Endothelial cell of umbilical vein (primary cell): ENCODE measurements at regions of chr13 and their contacts with region 1.

Region 1: GRCh38 chr13:48769107-48769704 is 115.5 kb downstream of the CYSLTR2 start:
- DNase-seq: peak; percentile 93
- H3K4me3 ChIP-seq: no peak overlapping the region
- H3K27ac ChIP-seq: no peak overlapping the region
- H3K4me1 ChIP-seq: no peaks in the 10 kb centered on the region
- H3K27me3 ChIP-seq: peaks cover 15 to 30% of the 10 kb centered on the region in 2 experiments
- CTCF ChIP-seq: peak; percentile 92 to 98
- POLR2A ChIP-seq: no peak

Region 2: GRCh38 chr13:46893798-46894560 is 1875.2 kb before region 1 on chr13:
- CTCF ChIA-PET with region 1: interaction called, 9 read pairs
- POLR2A ChIA-PET with region 1: no interaction called
- dilution Hi-C with region 1: no loop called
- intact Hi-C with region 1: loop called (anchors 1 kb)
- DNase-seq: peak; percentile 43
- H3K4me3 ChIP-seq: peak overlapping the region in 1 of 3 experiments; percentile 29
- H3K27ac ChIP-seq: no peak overlapping the region
- H3K4me1 ChIP-seq: no peaks in the 10 kb centered on the region
- H3K27me3 ChIP-seq: peaks cover 4 to 15% of the 10 kb centered on the region in 2 experiments
- CTCF ChIP-seq: peak; percentile 72 to 94
- POLR2A ChIP-seq: no peak

Region 3: DNA sequence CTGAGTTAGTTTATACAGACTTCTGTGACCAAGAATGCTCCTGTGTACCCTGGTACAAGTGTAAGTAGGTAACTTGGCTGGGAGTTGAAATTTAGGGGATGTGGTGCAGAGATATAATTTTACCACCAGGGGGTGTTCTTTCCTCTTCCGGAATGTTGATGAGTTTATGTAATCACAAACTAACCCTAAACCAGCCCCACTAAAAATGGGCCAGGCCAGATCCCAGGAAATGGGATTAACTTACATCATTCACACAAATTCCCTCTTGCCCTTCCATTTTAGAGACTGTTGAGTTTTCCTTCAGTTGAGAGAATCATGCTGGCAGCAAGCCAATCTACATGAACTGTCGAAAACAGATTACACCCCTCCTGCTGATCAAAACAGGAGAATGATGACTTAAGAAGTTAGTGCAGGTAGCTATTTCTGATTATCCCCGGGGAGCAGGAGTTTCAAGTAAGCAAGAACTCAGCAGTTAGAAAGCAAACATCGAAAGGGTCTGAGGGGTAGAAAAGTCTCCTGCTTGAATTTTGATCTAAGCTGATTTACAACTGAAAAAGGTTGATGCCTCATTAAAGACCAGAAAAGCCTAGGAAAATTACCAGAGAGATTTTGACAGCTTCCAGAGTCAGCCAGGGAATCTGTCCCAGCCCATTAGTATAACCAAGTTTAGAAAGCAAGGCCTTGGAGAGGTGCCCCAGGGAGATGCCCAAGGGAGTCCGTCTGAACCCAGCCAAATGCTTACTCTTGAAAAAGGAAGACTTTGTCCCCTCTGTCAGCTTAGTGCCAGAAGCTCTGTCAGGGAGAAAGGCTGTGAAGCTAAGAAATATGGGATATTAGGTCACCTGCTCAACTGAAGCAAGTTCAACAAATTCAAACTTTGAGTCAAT is 642.0 kb before region 1 on chr13:
- CTCF ChIA-PET with region 1: interaction called, 20 read pairs
- POLR2A ChIA-PET with region 1: no interaction called
- dilution Hi-C with region 1: no loop called
- intact Hi-C with region 1: loop called (anchors 5 kb)
- DNase-seq: peak; percentile 66
- H3K4me3 ChIP-seq: no peak overlapping the region
- H3K27ac ChIP-seq: no peak overlapping the region
- H3K4me1 ChIP-seq: peaks cover 15% of the 10 kb centered on the region
- H3K27me3 ChIP-seq: peaks cover 0 to under 1% of the 10 kb centered on the region in 2 experiments
- CTCF ChIP-seq: peak; percentile 58 to 62
- POLR2A ChIP-seq: no peak

Region 4: GRCh38 chr13:48585456-48585840 is 183.8 kb before region 1 on chr13:
- CTCF ChIA-PET with region 1: interaction called, 18 read pairs
- POLR2A ChIA-PET with region 1: no interaction called
- dilution Hi-C with region 1: no loop called
- intact Hi-C with region 1: no loop called
- DNase-seq: peak; percentile 96
- H3K4me3 ChIP-seq: no peak overlapping the region
- H3K27ac ChIP-seq: no peak overlapping the region
- H3K4me1 ChIP-seq: peaks cover 32% of the 10 kb centered on the region
- H3K27me3 ChIP-seq: peaks cover 0 to 4% of the 10 kb centered on the region in 2 experiments
- CTCF ChIP-seq: no peak
- POLR2A ChIP-seq: no peak

Region 5: DNA sequence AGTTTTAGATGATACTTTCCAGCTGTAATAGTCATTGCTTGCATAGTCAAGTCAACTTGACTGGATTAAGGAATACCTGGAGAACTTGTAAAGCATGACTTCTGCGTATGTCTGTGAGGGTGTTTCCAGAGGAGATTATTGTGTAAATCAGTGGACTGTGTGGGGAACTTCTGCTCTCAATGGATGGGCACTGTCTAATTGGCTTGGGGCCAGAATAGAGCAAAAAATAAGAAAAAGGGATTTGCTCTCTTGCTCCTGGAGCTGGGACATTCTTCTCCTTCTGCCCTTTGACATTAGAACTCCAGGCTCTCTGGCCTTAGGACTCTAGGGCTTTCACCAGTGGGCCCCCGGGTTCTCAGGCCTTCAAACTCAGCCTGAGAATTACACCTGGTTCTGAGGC is 82.4 kb before region 1 on chr13:
- CTCF ChIA-PET with region 1: no interaction called
- POLR2A ChIA-PET with region 1: no interaction called
- dilution Hi-C with region 1: no loop called
- intact Hi-C with region 1: no loop called
- DNase-seq: no peak
- H3K4me3 ChIP-seq: no peak overlapping the region
- H3K27ac ChIP-seq: no peak overlapping the region
- H3K4me1 ChIP-seq: no peaks in the 10 kb centered on the region
- H3K27me3 ChIP-seq: peaks cover 2 to 3% of the 10 kb centered on the region in 2 experiments
- CTCF ChIP-seq: no peak
- POLR2A ChIP-seq: no peak

Region 6: DNA sequence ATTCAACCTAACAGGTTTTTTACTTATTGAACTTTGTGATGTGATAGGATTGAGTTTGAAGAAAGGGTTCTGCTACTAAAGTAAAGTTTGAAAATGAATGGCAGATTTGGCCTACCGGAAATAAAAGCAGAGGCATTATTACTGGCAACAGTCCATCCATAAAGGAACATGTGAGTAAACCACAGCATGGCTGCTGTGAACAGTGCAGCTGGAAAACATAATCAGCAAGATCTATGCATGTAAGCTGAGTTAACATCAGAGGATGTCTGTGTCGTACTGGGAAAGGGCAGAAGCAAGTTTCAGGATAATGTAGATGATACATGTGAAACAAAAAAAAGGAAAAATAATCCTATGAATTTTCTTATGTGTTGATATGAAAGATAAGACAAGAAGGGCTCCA is 27.8 kb before region 1 on chr13:
- CTCF ChIA-PET with region 1: interaction called, 66 read pairs
- POLR2A ChIA-PET with region 1: no interaction called
- dilution Hi-C with region 1: no loop called
- intact Hi-C with region 1: no loop called
- DNase-seq: peak; percentile 37
- H3K4me3 ChIP-seq: no peak overlapping the region
- H3K27ac ChIP-seq: no peak overlapping the region
- H3K4me1 ChIP-seq: no peaks in the 10 kb centered on the region
- H3K27me3 ChIP-seq: peaks cover 4 to 8% of the 10 kb centered on the region in 2 experiments
- CTCF ChIP-seq: no peak
- POLR2A ChIP-seq: no peak

Region 7: GRCh38 chr13:49502954-49503353 is 733.7 kb after region 1 on chr13:
- CTCF ChIA-PET with region 1: no interaction called
- POLR2A ChIA-PET with region 1: no interaction called
- dilution Hi-C with region 1: no loop called
- intact Hi-C with region 1: no loop called
- DNase-seq: peak; percentile 58
- H3K4me3 ChIP-seq: no peak overlapping the region
- H3K27ac ChIP-seq: no peak overlapping the region
- H3K4me1 ChIP-seq: peaks cover 4% of the 10 kb centered on the region
- H3K27me3 ChIP-seq: no peaks in the 10 kb centered on the region
- CTCF ChIP-seq: no peak
- POLR2A ChIP-seq: no peak

Region 8: GRCh38 chr13:49606747-49607648 is 837.8 kb after region 1 on chr13:
- CTCF ChIA-PET with region 1: interaction called, 4 read pairs
- POLR2A ChIA-PET with region 1: no interaction called
- dilution Hi-C with region 1: no loop called
- intact Hi-C with region 1: loop called (anchors 5 kb)
- DNase-seq: peak; percentile 89
- H3K4me3 ChIP-seq: peak overlapping the region in 2 of 3 experiments; percentile 5 to 27
- H3K27ac ChIP-seq: peak overlapping the region; percentile 28
- H3K4me1 ChIP-seq: no peaks in the 10 kb centered on the region
- H3K27me3 ChIP-seq: no peaks in the 10 kb centered on the region
- CTCF ChIP-seq: peak; percentile 80 to 83
- POLR2A ChIP-seq: no peak

Region 9: GRCh38 chr13:50713523-50714248 is 1944.5 kb after region 1 on chr13:
- CTCF ChIA-PET with region 1: no interaction called
- POLR2A ChIA-PET with region 1: no interaction called
- dilution Hi-C with region 1: no loop called
- intact Hi-C with region 1: no loop called
- DNase-seq: no peak
- H3K4me3 ChIP-seq: no peak overlapping the region
- H3K27ac ChIP-seq: no peak overlapping the region
- H3K4me1 ChIP-seq: no peaks in the 10 kb centered on the region
- H3K27me3 ChIP-seq: peaks cover 2 to 12% of the 10 kb centered on the region in 2 experiments
- CTCF ChIP-seq: no peak
- POLR2A ChIP-seq: no peak